ENCODE measurements at regions of chr14 and their contacts with region 1.

Region 1: GRCh38 chr14:64279704-64280668 is 14.2 kb downstream of the ESR2 start:
- DNase-seq: peak; percentile 36
- H3K4me3 Mint-ChIP-seq: no peak overlapping the region
- H3K27ac Mint-ChIP-seq: peak overlapping the region; percentile 9
- H3K4me1 Mint-ChIP-seq: peaks cover 31% of the 10 kb centered on the region
- H3K27me3 Mint-ChIP-seq: peaks cover 2% of the 10 kb centered on the region

Region 2: GRCh38 chr14:63863004-63863403 is 417.0 kb before region 1 on chr14:
- intact Hi-C with region 1: loop called (anchors 5 kb)
- DNase-seq: no peak
- H3K4me3 Mint-ChIP-seq: no peak overlapping the region
- H3K27ac Mint-ChIP-seq: peak overlapping the region; percentile 54
- H3K4me1 Mint-ChIP-seq: peaks cover 29% of the 10 kb centered on the region
- H3K27me3 Mint-ChIP-seq: peaks cover 15% of the 10 kb centered on the region

Region 3: DNA sequence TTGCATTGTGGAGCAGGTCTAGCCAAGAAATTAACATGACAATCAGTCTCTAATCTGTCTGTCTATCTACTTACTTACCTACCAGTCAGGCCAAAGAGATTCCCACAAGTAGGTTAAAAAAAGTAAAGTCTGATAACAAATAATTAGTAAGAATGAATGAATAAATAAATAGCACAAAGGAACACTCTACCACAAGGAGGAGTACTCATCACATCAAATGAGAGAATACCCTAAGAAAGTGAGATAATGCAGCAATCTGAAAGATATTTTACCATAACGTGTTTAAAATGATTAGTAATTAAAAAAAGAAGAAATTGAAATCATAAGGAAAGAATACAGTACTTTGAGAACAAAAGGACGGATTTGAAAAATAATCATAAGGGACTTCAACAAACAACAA is 239.9 kb before region 1 on chr14:
- intact Hi-C with region 1: no loop called
- DNase-seq: no peak
- H3K4me3 Mint-ChIP-seq: no peak overlapping the region
- H3K27ac Mint-ChIP-seq: no peak overlapping the region
- H3K4me1 Mint-ChIP-seq: no peaks in the 10 kb centered on the region
- H3K27me3 Mint-ChIP-seq: no peaks in the 10 kb centered on the region

Region 4: DNA sequence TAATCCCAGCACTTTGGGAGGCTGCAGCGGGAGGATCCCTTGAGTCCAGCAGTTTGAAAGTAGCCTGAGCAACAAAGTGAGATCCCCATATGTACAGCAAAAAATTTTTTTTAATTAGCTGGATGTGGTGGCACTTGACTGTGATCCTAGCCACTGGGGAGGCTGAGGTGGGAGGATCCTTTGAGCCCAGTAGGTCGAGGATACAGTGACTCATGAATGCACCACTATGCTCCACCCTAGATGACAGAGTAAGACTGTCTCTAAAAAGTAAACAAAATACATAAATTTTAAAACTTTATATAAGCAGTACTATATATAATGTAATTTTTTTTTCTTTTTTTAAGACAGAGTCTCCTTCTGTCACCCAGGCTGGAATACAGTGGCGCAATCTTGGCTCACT is 101.2 kb before region 1 on chr14:
- intact Hi-C with region 1: loop called (anchors 5 kb)
- DNase-seq: no peak
- H3K4me3 Mint-ChIP-seq: no peak overlapping the region
- H3K27ac Mint-ChIP-seq: no peak overlapping the region
- H3K4me1 Mint-ChIP-seq: peaks cover 12% of the 10 kb centered on the region
- H3K27me3 Mint-ChIP-seq: no peaks in the 10 kb centered on the region

Region 5: DNA sequence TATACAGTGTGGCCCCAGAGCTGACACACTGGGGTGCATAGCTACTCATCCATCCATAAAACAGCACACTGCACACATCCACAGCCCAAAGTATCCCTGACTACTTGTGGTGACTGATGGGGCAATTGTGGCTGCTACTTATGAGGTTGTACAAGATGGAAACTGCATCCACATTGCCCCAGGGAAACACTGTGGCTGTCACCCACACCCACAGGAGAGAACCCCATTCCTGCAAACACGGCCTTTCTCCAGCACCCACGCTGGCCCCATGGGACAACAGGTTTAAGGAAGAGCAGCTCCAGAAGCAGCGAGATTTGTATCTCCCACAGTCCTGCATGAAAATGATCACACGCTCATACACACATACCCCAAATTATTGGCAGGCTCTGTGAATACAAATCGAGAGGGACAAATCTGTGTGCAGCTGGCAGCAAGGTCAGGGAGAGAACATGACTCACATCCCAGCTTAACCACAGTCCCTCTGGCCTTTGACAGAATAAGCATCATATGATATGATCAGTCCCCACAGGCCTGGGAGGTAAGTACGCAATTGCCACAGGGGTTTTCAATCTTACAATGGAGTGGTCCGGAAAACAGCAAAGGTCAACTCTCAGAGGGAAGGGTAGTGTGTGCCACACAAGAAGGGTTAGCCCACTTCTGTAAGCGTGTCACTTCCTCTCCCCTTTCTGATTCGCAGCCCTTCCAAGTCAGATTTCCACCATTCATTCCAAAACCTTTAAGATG is 47.7 kb before region 1 on chr14:
- intact Hi-C with region 1: loop called (anchors 1 kb)
- DNase-seq: no peak
- H3K4me3 Mint-ChIP-seq: no peak overlapping the region
- H3K27ac Mint-ChIP-seq: peak overlapping the region; percentile 78
- H3K4me1 Mint-ChIP-seq: peaks cover 25% of the 10 kb centered on the region
- H3K27me3 Mint-ChIP-seq: peaks cover 15% of the 10 kb centered on the region

Region 6: GRCh38 chr14:64266239-64266638 is 13.7 kb before region 1 on chr14:
- intact Hi-C with region 1: loop called (anchors 1 kb)
- DNase-seq: no peak
- H3K4me3 Mint-ChIP-seq: peak overlapping the region; percentile 5
- H3K27ac Mint-ChIP-seq: peak overlapping the region; percentile 68
- H3K4me1 Mint-ChIP-seq: peaks cover 21% of the 10 kb centered on the region
- H3K27me3 Mint-ChIP-seq: no peaks in the 10 kb centered on the region

Region 7: GRCh38 chr14:65019944-65020566 is 740.1 kb after region 1 on chr14:
- intact Hi-C with region 1: no loop called
- DNase-seq: no peak
- H3K4me3 Mint-ChIP-seq: no peak overlapping the region
- H3K27ac Mint-ChIP-seq: no peak overlapping the region
- H3K4me1 Mint-ChIP-seq: no peaks in the 10 kb centered on the region
- H3K27me3 Mint-ChIP-seq: no peaks in the 10 kb centered on the region